GM12878 (cell line): ENCODE measurements at regions of chr1 and their contacts with region 1.

Region 1: GRCh38 chr1:245888809-245889208 is 618.3 kb downstream of the SMYD3 start:
- DNase-seq: peak; percentile 20
- ATAC-seq: peak; percentile 76
- H3K4me3 ChIP-seq: no peak overlapping the region
- H3K27ac ChIP-seq: no peak overlapping the region
- H3K4me1 ChIP-seq: no peaks in the 10 kb centered on the region
- H3K27me3 ChIP-seq: no peaks in the 10 kb centered on the region
- CTCF ChIP-seq: peak; percentile 45 to 53 (median 51); a peak in 5 of 6 replicates
- EP300 ChIP-seq: no peak
- POLR2A ChIP-seq: no peak
- RAD21 ChIP-seq: peak; percentile 47

Region 2: GRCh38 chr1:245645894-245646293 is 242.9 kb before region 1 on chr1:
- CTCF ChIA-PET with region 1: interaction called, 11 read pairs
- POLR2A ChIA-PET with region 1: no interaction called
- RAD21 ChIA-PET with region 1: interaction called, 4 read pairs
- SMC1A ChIA-PET with region 1: interaction called, 4 read pairs
- in situ Hi-C with region 1: no loop called
- intact Hi-C with region 1: no loop called
- DNase-seq: peak; percentile 72
- ATAC-seq: peak; percentile 76
- H3K4me3 ChIP-seq: peak overlapping the region; percentile 61
- H3K27ac ChIP-seq: peak overlapping the region; percentile 84
- H3K4me1 ChIP-seq: peaks cover 21% of the 10 kb centered on the region
- H3K27me3 ChIP-seq: no peaks in the 10 kb centered on the region
- CTCF ChIP-seq: no peak
- EP300 ChIP-seq: peak; percentile 46 to 78; a peak in 2 of 4 replicates
- POLR2A ChIP-seq: no peak
- RAD21 ChIP-seq: no peak

Region 3: GRCh38 chr1:245807306-245807705 is 81.5 kb before region 1 on chr1:
- CTCF ChIA-PET with region 1: interaction called, 14 read pairs
- POLR2A ChIA-PET with region 1: no interaction called
- RAD21 ChIA-PET with region 1: interaction called, 4 read pairs
- SMC1A ChIA-PET with region 1: interaction called, 3 read pairs
- in situ Hi-C with region 1: no loop called
- intact Hi-C with region 1: no loop called
- DNase-seq: peak; percentile 80
- ATAC-seq: peak; percentile 91
- H3K4me3 ChIP-seq: peak overlapping the region; percentile 37; the same call in 1 of the 2 replicates
- H3K27ac ChIP-seq: peak overlapping the region; percentile 41
- H3K4me1 ChIP-seq: peaks cover 45% of the 10 kb centered on the region
- H3K27me3 ChIP-seq: no peaks in the 10 kb centered on the region
- CTCF ChIP-seq: no peak
- EP300 ChIP-seq: no peak
- POLR2A ChIP-seq: no peak
- RAD21 ChIP-seq: no peak

Region 4: DNA sequence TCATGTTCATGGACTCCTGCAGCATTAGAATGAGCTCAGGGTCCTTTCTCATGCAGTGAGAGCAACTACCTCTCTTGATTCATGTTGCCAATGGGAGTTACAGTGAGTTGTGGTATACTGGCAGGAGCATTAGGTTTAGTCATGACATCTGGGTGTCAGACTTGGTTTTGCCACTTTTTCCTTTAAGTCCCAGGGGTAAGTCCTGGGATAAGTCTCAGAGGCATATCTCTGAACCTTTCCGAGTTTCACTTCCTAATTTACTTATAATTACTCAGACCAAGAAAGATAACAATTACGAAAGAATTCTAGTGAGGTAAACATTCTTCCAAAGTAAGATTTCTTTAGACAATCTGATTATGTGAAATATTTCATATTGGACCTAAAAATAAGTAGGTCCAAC is 12.2 kb after region 1 on chr1:
- CTCF ChIA-PET with region 1: interaction called, 30 read pairs
- POLR2A ChIA-PET with region 1: no interaction called
- RAD21 ChIA-PET with region 1: interaction called, 9 read pairs
- SMC1A ChIA-PET with region 1: interaction called, 18 read pairs
- in situ Hi-C with region 1: no loop called
- intact Hi-C with region 1: no loop called
- DNase-seq: peak; percentile 54
- ATAC-seq: peak; percentile 87
- H3K4me3 ChIP-seq: no peak overlapping the region
- H3K27ac ChIP-seq: peak overlapping the region; percentile 2; the same call in 1 of the 2 replicates
- H3K4me1 ChIP-seq: peaks cover 8% of the 10 kb centered on the region; the same call in 1 of the 2 replicates
- H3K27me3 ChIP-seq: no peaks in the 10 kb centered on the region
- CTCF ChIP-seq: no peak
- EP300 ChIP-seq: peak; percentile 58 to 64; a peak in 2 of 4 replicates
- POLR2A ChIP-seq: no peak
- RAD21 ChIP-seq: no peak

Region 5: DNA sequence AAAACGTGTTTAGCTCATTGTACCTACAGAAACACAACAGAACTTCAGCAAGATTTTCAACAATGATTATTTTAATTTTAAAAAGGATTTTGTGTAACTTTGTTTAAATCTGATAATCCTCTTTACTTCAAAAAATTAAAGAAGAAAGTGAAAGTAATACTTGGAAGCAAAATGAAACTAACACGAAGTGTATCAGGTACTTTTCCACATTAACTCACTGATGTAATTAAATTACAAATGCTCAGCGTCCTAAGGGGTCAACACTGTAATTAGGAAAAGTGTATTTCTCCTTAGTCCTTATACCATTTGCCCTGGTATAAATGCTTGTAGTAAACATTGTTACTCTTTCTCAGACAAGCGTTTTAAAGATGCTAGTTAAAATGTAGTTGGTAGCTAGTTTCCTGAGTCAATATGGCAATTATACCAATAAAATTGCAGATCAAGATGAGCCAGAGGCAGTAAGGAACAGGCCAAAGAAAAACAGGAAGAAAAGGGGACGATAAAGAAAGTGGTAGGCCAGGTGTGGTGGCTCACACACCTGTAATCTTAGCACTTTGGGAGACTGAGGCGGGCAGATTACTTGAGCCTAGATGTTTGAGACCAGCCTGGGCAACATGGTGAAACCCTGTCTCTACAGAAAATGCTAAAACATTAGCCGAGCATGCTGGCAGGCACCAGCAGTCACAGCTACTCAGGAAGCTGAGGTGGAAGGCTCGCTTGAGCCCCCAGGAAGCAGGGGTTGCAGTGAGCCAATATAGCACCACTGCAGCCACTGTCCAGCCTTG is 65.3 kb after region 1 on chr1:
- CTCF ChIA-PET with region 1: interaction called, 12 read pairs
- POLR2A ChIA-PET with region 1: interaction called, 3 read pairs
- RAD21 ChIA-PET with region 1: interaction called, 6 read pairs
- SMC1A ChIA-PET with region 1: interaction called, 24 read pairs
- in situ Hi-C with region 1: no loop called
- intact Hi-C with region 1: no loop called
- DNase-seq: peak; percentile 32
- ATAC-seq: peak; percentile 67
- H3K4me3 ChIP-seq: peak overlapping the region; percentile 66
- H3K27ac ChIP-seq: peak overlapping the region; percentile 98
- H3K4me1 ChIP-seq: peaks cover 25% of the 10 kb centered on the region
- H3K27me3 ChIP-seq: no peaks in the 10 kb centered on the region
- CTCF ChIP-seq: no peak
- EP300 ChIP-seq: no peak
- POLR2A ChIP-seq: no peak
- RAD21 ChIP-seq: no peak

Region 6: GRCh38 chr1:245986404-245987220 is 97.8 kb after region 1 on chr1:
- CTCF ChIA-PET with region 1: interaction called, 17 read pairs
- POLR2A ChIA-PET with region 1: no interaction called
- RAD21 ChIA-PET with region 1: interaction called, 7 read pairs
- SMC1A ChIA-PET with region 1: interaction called, 12 read pairs
- in situ Hi-C with region 1: no loop called
- intact Hi-C with region 1: no loop called
- DNase-seq: no peak
- ATAC-seq: no peak
- H3K4me3 ChIP-seq: no peak overlapping the region
- H3K27ac ChIP-seq: no peak overlapping the region
- H3K4me1 ChIP-seq: peaks cover 16% of the 10 kb centered on the region
- H3K27me3 ChIP-seq: no peaks in the 10 kb centered on the region
- CTCF ChIP-seq: no peak
- EP300 ChIP-seq: no peak
- POLR2A ChIP-seq: no peak
- RAD21 ChIP-seq: no peak

Region 7: DNA sequence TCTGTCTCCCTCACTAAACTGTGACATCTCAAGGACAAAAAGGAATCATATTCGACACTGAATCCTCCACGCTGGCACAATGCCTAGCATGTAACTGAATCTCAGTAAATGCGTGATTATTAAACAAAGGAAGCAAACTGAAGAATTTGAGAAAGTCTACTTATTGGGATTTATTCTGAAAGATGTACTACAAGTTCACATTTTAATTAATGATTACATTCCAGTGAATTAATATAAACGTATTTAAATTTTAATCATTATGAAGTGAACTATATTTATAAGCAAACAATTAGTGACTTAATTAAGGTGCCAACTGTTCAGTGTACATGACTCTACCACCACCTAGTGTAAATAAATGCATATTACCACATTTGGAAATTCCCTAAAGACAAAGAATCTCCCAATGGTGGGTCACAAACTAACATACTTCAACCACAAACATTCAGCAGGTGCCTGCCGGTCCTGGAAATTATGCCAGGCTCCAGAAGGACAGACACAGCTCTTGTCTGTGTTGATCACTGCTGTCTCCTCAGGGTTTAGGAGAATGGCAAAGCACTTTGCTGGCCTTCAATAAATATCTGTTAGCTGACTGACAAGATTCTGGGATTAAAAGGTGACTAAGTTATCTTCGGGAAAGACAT is 561.9 kb after region 1 on chr1:
- CTCF ChIA-PET with region 1: interaction called, 5 read pairs
- POLR2A ChIA-PET with region 1: no interaction called
- RAD21 ChIA-PET with region 1: no interaction called
- SMC1A ChIA-PET with region 1: no interaction called
- in situ Hi-C with region 1: no loop called
- intact Hi-C with region 1: loop called (anchors 10 kb)
- DNase-seq: no peak
- ATAC-seq: peak; percentile 85
- H3K4me3 ChIP-seq: no peak overlapping the region
- H3K27ac ChIP-seq: no peak overlapping the region
- H3K4me1 ChIP-seq: no peaks in the 10 kb centered on the region
- H3K27me3 ChIP-seq: no peaks in the 10 kb centered on the region
- CTCF ChIP-seq: peak; percentile 56 to 82 (median 65); a peak in 4 of 6 replicates
- EP300 ChIP-seq: no peak
- POLR2A ChIP-seq: no peak
- RAD21 ChIP-seq: peak; percentile 90